ENCODE measurements at regions of chr20 and their contacts with region 1.

Region 1: DNA sequence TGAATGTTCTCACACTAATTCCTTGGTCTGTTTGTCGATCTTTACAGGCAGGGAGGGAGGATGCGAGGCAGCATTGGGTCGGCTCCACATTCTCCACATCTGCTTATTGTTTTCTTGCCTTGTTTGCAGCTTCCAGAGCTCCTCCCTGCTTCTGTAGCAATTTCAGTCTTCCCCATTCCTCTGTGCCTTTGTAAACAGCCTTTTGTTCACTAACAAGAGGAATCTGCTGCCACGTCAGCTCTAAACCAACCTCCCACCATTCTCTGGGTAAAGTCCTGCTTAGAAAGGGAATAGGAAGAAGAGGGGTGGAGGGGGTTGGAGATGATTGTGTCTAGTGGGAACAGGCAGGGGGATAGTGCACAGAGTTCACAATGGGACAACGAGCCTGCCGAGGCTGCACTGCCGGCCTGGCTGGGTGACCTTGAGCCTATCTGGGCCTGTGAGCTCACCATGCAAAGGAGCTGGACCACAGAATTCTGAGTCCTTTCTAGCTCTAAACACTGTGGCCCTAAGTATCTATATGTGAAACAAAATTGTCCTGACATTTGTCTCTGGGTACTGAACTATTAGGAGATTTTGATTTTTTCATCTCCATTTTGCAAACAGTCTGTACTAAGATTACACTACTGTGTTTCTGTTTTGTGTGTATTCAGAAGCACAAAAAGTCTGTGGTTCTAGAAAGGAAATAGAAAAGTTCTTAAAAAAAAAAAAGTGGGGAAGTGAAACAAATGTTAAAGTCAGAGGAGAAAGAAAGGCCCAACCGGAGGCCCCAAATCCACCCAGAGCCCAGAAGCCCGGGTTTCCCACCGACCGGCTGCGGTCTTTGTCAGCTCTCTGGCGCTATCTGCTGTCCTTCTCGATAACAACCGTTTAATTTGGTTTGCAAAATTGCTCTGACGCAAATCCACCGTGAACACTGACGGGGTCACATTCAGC is 1.4 kb upstream of the PRND start:
- DNase-seq: peak; percentile 57
- ATAC-seq: peak; percentile 90
- H3K4me3 ChIP-seq: no peak overlapping the region
- H3K27ac ChIP-seq: no peak overlapping the region
- H3K4me1 ChIP-seq: peaks cover 0 to 7% of the 10 kb centered on the region in 2 experiments; a peak in 1 of 4 replicates
- H3K27me3 ChIP-seq: no peaks in the 10 kb centered on the region
- CTCF ChIP-seq: peak; percentile 60 to 93 (median 74)
- POLR2A ChIP-seq: no peak
- RAD21 ChIP-seq: peak; percentile 97

Region 2: GRCh38 chr20:4108495-4109306 is 611.6 kb before region 1 on chr20:
- CTCF ChIA-PET with region 1: no interaction called
- POLR2A ChIA-PET with region 1: no interaction called
- RAD21 ChIA-PET with region 1: no interaction called
- intact Hi-C with region 1: loop called (anchors 2 kb)
- DNase-seq: peak; percentile 83
- ATAC-seq: peak; percentile 94
- H3K4me3 ChIP-seq: no peak overlapping the region
- H3K27ac ChIP-seq: no peak overlapping the region; the same call in 1 of the 2 replicates
- H3K4me1 ChIP-seq: peaks cover 13 to 29% of the 10 kb centered on the region in 2 experiments; a peak in 3 of 4 replicates
- H3K27me3 ChIP-seq: no peaks in the 10 kb centered on the region
- CTCF ChIP-seq: peak; percentile 97 to 99 (median 98)
- POLR2A ChIP-seq: no peak
- RAD21 ChIP-seq: peak; percentile 100

Region 3: GRCh38 chr20:4702562-4703280 is 17.6 kb before region 1 on chr20:
- CTCF ChIA-PET with region 1: no interaction called
- POLR2A ChIA-PET with region 1: no interaction called
- RAD21 ChIA-PET with region 1: no interaction called
- intact Hi-C with region 1: no loop called
- DNase-seq: no peak
- ATAC-seq: peak; percentile 12; the same call in 1 of the 2 replicates
- H3K4me3 ChIP-seq: no peak overlapping the region
- H3K27ac ChIP-seq: no peak overlapping the region
- H3K4me1 ChIP-seq: peaks cover 16 to 22% of the 10 kb centered on the region in 2 experiments
- H3K27me3 ChIP-seq: no peaks in the 10 kb centered on the region
- CTCF ChIP-seq: no peak
- POLR2A ChIP-seq: no peak
- RAD21 ChIP-seq: no peak

Region 4: GRCh38 chr20:4766631-4767030 is 46.3 kb after region 1 on chr20:
- CTCF ChIA-PET with region 1: no interaction called
- POLR2A ChIA-PET with region 1: no interaction called
- RAD21 ChIA-PET with region 1: no interaction called
- intact Hi-C with region 1: no loop called
- DNase-seq: no peak
- ATAC-seq: no peak
- H3K4me3 ChIP-seq: no peak overlapping the region
- H3K27ac ChIP-seq: no peak overlapping the region
- H3K4me1 ChIP-seq: no peaks in the 10 kb centered on the region
- H3K27me3 ChIP-seq: no peaks in the 10 kb centered on the region
- CTCF ChIP-seq: no peak
- POLR2A ChIP-seq: no peak
- RAD21 ChIP-seq: no peak

Region 5: GRCh38 chr20:4850960-4851359 is 130.7 kb after region 1 on chr20:
- CTCF ChIA-PET with region 1: no interaction called
- POLR2A ChIA-PET with region 1: no interaction called
- RAD21 ChIA-PET with region 1: no interaction called
- intact Hi-C with region 1: no loop called
- DNase-seq: no peak
- ATAC-seq: no peak
- H3K4me3 ChIP-seq: no peak overlapping the region
- H3K27ac ChIP-seq: no peak overlapping the region
- H3K4me1 ChIP-seq: no peaks in the 10 kb centered on the region
- H3K27me3 ChIP-seq: no peaks in the 10 kb centered on the region
- CTCF ChIP-seq: no peak
- POLR2A ChIP-seq: no peak
- RAD21 ChIP-seq: no peak

Region 6: GRCh38 chr20:4937397-4938319 is 217.3 kb after region 1 on chr20:
- CTCF ChIA-PET with region 1: no interaction called
- POLR2A ChIA-PET with region 1: no interaction called
- RAD21 ChIA-PET with region 1: no interaction called
- intact Hi-C with region 1: no loop called
- DNase-seq: no peak
- ATAC-seq: no peak
- H3K4me3 ChIP-seq: no peak overlapping the region
- H3K27ac ChIP-seq: no peak overlapping the region
- H3K4me1 ChIP-seq: no peaks in the 10 kb centered on the region
- H3K27me3 ChIP-seq: no peaks in the 10 kb centered on the region
- CTCF ChIP-seq: no peak
- POLR2A ChIP-seq: no peak
- RAD21 ChIP-seq: no peak